Aorta (tissue), 5 donors: ENCODE measurements at regions of chr4 and their contacts with region 1.

Region 1: GRCh38 chr4:110163327-110164069 is 34.9 kb downstream of the ELOVL6 start:
- DNase-seq: no peak
- ATAC-seq: no peak
- H3K4me3 ChIP-seq: no peak overlapping the region
- H3K27ac ChIP-seq: peak overlapping the region; percentile 57 to 76
- H3K4me1 ChIP-seq: peaks cover 0 to 2% of the 10 kb centered on the region in 2 donors
- H3K27me3 ChIP-seq: no peaks in the 10 kb centered on the region

Region 2: GRCh38 chr4:110087070-110087708 is 76.3 kb before region 1 on chr4:
- intact Hi-C with region 1: loop called in 1 of 2 experiments (anchors 5 kb)
- DNase-seq: no peak
- ATAC-seq: no peak
- H3K4me3 ChIP-seq: no peak overlapping the region
- H3K27ac ChIP-seq: no peak overlapping the region
- H3K4me1 ChIP-seq: peaks cover 0 to 3% of the 10 kb centered on the region in 2 donors
- H3K27me3 ChIP-seq: no peaks in the 10 kb centered on the region

Region 3: GRCh38 chr4:110104661-110105060 is 58.8 kb before region 1 on chr4:
- intact Hi-C with region 1: no loop called
- DNase-seq: no peak
- ATAC-seq: no peak
- H3K4me3 ChIP-seq: no peak overlapping the region
- H3K27ac ChIP-seq: no peak overlapping the region
- H3K4me1 ChIP-seq: peaks cover 0 to 2% of the 10 kb centered on the region in 2 donors
- H3K27me3 ChIP-seq: no peaks in the 10 kb centered on the region

Region 4: DNA sequence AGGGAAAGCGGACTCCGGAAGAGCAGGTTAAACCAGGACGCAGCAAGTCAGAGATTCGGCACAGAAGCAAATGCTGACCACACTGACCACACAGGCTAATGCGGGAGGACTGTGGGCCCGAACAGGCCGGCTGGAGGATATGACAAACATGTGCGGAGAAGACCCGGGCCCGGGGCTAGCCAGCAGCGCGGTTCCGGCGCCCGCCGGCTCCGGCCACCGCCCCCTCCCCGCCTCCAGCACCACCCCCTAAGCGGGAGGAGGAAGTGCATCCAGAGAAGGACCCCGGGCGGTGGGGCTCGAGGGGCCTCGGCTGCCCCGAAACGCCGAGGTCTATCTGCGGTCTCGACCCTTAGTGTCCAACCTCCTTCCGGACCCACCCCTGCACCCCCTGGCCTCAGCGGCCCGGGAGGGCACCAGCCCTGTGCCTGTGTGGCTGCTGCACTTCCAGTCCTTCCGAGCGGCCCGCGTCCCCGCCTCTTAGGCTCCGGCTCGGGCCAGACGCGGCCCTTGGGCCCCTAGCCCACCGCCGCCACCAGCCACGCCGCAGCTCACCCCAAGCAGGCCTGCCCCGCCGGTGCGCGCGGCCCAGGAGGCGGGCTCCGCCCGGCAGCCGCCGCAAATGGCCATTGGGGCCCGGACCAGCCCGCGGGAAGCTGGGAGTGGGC is 32.8 kb after region 1 on chr4:
- intact Hi-C with region 1: loop called in 1 of 2 experiments (anchors 2 kb)
- DNase-seq: peak; percentile 56 to 82
- ATAC-seq: peak; percentile 83
- H3K4me3 ChIP-seq: peak overlapping the region; percentile 38 to 65
- H3K27ac ChIP-seq: peak overlapping the region in 1 of 2 donors; percentile 60
- H3K4me1 ChIP-seq: no peaks in the 10 kb centered on the region
- H3K27me3 ChIP-seq: no peaks in the 10 kb centered on the region